ENCODE measurements at regions of chr19 and their contacts with region 1.

Region 1: DNA sequence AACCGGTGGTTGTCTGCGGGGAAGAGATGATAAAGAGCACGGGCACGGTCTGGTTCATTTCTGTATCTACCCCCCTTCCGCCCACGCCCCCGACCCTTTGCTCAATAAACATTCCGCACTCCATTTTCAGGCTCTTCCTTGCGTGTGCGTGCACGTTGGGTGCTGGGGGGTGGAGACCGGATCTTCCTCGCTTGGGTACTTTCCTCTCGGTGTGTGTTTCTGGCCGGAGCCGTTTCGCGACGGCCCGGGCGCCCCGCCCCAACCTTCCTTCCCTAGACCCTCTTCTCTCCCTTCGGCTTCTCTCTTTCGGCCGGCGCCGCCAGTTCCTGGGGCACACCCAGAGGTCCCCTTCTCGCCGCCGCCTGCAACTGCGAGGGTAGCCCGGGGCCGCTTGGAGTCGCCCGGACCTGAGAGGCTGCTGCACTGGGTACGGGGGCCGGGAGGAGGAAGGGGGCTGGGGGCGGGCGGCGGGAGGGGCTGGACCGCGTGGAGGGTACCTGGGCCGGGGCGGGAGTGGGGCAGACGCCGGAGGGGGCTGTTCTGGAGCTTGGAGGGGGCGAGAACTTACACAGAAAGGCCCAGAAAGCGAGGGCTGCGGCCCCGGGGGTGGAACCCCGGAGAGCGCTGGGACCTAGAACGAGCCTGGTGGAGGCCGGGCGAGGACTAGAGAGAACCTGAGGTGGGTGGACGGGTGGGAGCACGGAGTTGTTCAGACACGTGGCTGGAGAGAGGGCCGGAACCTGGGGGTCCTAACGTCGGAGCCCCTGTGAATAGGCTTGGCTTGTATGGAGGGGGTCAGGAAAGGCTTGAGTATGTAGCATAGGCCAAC is at the start of gene ZNF581:
- DNase-seq: peak; percentile 66 to 79
- H3K4me3 ChIP-seq: peak within 1 kb of the TSS; percentile 66
- H3K27ac ChIP-seq: peak within 1 kb of the TSS; percentile 44
- H3K4me1 ChIP-seq: peaks cover 8% of the 10 kb centered on the region
- H3K27me3 ChIP-seq: no peaks in the 10 kb centered on the region
- CTCF ChIP-seq: no peak
- total RNA-seq, gene ZNF581: 53.5 and 81.9 TPM in 2 replicates

Region 2: GRCh38 chr19:55336101-55336500 is 307.5 kb before region 1 on chr19:
- CTCF ChIA-PET with region 1: no interaction called
- POLR2A ChIA-PET with region 1: no interaction called
- intact Hi-C with region 1: no loop called
- DNase-seq: peak in 1 of 2 experiments; percentile 32
- H3K4me3 ChIP-seq: no peak overlapping the region
- H3K27ac ChIP-seq: no peak overlapping the region
- H3K4me1 ChIP-seq: peaks cover 8% of the 10 kb centered on the region
- H3K27me3 ChIP-seq: no peaks in the 10 kb centered on the region
- CTCF ChIP-seq: no peak

Region 3: DNA sequence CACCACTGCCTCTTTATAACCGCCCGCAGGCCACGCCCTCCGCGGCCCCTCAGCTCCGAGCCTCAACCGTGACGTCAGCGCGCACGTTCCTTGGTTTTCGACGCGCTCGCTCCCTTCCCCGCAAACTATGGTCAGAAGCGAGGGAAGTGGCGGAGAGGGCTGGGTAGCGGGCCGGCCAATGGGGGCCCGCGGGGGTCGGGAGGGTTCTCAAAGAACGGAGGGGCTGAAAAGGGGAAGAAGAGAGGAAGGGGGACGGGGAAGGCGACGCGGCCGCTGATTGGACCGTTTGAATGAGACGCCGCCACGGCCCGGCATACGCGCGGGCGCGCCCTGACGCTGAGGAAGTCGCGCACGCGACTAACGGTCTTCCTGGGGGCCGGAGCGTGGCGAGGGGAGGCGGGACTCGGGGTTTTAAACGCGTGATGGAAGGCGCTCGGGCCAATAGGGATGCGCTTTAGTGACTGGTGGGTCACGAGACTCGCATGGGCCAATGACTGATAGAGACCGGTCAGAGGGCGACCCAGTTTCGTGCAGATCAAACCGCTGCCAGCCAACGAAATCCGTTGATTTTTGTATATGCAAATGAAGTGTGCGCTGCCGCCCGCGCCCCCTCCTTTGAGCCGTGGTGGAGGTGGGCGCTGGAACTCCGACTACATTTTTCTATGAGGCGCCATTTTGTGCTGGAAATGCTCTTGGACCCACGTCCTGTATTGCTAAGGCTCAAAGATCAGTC is 235.6 kb before region 1 on chr19:
- CTCF ChIA-PET with region 1: no interaction called
- POLR2A ChIA-PET with region 1: interaction called, 14 read pairs
- intact Hi-C with region 1: no loop called
- DNase-seq: peak; percentile 95 to 98
- H3K4me3 ChIP-seq: peak overlapping the region; percentile 63
- H3K27ac ChIP-seq: peak overlapping the region; percentile 86
- H3K4me1 ChIP-seq: peaks cover 21% of the 10 kb centered on the region
- H3K27me3 ChIP-seq: no peaks in the 10 kb centered on the region
- CTCF ChIP-seq: no peak

Region 4: GRCh38 chr19:55586976-55587668 is 56.4 kb before region 1 on chr19:
- CTCF ChIA-PET with region 1: no interaction called
- POLR2A ChIA-PET with region 1: no interaction called
- intact Hi-C with region 1: no loop called
- DNase-seq: peak; percentile 96 to 100
- H3K4me3 ChIP-seq: peak overlapping the region; percentile 57
- H3K27ac ChIP-seq: peak overlapping the region; percentile 11; the same call in 1 of the 2 replicates
- H3K4me1 ChIP-seq: peaks cover 10% of the 10 kb centered on the region
- H3K27me3 ChIP-seq: 0 out of 2 replicates have a peak, but pooled peaks cover 5% of the 10 kb centered on the region
- CTCF ChIP-seq: no peak

Region 5: DNA sequence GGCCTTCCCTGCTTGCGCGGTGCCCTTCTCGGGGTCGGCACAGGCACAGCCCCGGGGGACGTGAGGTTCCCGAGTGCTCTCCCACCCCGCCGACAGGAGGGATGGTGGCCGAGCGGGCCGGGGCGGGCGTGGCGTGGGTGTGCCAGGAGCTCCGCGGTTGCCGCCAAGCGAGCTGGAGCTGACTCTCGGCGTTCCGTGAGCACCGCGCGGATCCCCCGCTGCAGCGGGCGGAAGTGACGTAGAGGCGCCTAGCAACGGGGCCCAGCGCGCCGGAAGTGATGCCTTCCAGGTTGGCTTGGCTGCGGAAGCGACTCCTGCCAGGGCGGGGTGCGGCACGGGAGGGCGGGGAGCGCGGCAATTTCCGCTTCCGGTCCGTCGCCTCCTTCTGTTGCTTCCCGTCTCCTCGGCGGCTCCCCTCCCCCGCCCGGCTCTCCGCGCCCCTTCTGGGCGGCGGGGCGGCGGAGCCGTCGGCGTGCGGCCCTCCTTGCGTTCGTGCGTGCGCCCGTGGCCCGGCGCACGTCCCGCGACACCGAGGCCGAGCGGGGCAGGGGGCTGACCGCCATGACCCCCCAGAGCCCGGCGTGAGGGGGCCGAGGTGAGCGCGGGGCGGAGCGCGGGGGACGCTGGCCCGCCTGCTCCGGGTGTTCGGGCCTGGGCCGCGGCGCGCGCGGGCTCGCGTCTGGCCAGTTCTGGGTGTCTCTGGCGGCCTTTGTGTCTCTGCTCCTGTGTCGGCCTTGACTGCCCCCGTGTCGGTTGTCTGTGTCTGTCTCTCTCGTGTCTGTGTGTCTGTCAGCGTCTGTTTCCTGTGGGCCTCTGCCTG is 31.5 kb after region 1 on chr19 and contains the start of gene EPN1:
- CTCF ChIA-PET with region 1: no interaction called
- POLR2A ChIA-PET with region 1: interaction called, 6 read pairs
- intact Hi-C with region 1: loop called (anchors 1 kb)
- DNase-seq: peak; percentile 94 to 98
- H3K4me3 ChIP-seq: peak within 1 kb of the TSS; percentile 93
- H3K27ac ChIP-seq: peak within 1 kb of the TSS; percentile 37; the same call in 1 of the 2 replicates
- H3K4me1 ChIP-seq: peaks cover 36% of the 10 kb centered on the region
- H3K27me3 ChIP-seq: no peaks in the 10 kb centered on the region
- CTCF ChIP-seq: no peak
- total RNA-seq, gene EPN1: 232 and 274 TPM in 2 replicates